ENCODE measurements at regions of chr18 and their contacts with region 1.

Region 1: GRCh38 chr18:77197073-77197472 is 52.6 kb upstream of the GALR1 start:
- DNase-seq: peak; percentile 13
- ATAC-seq: peak; percentile 80
- H3K4me3 ChIP-seq: no peak overlapping the region
- H3K27ac ChIP-seq: no peak overlapping the region
- H3K4me1 ChIP-seq: peaks cover 0 to 9% of the 10 kb centered on the region in 2 experiments; a peak in 2 of 4 replicates
- H3K27me3 ChIP-seq: no peaks in the 10 kb centered on the region
- CTCF ChIP-seq: peak; percentile 47 to 56 (median 49); a peak in 5 of 6 replicates
- POLR2A ChIP-seq: no peak
- RAD21 ChIP-seq: peak; percentile 49; the same call in 1 of the 2 replicates

Region 2: GRCh38 chr18:77207540-77207939 is 10.5 kb after region 1 on chr18:
- CTCF ChIA-PET with region 1: interaction called, 13 read pairs
- POLR2A ChIA-PET with region 1: no interaction called
- RAD21 ChIA-PET with region 1: no interaction called
- intact Hi-C with region 1: no loop called
- DNase-seq: peak; percentile 51
- ATAC-seq: peak; percentile 94
- H3K4me3 ChIP-seq: no peak overlapping the region
- H3K27ac ChIP-seq: no peak overlapping the region
- H3K4me1 ChIP-seq: peaks cover 8 to 14% of the 10 kb centered on the region in 2 experiments
- H3K27me3 ChIP-seq: no peaks in the 10 kb centered on the region
- CTCF ChIP-seq: peak; percentile 61 to 88 (median 82); a peak in 5 of 6 replicates
- POLR2A ChIP-seq: no peak
- RAD21 ChIP-seq: 0 out of 2 replicates have a peak, but pooled peaks have one; percentile 17

Region 3: DNA sequence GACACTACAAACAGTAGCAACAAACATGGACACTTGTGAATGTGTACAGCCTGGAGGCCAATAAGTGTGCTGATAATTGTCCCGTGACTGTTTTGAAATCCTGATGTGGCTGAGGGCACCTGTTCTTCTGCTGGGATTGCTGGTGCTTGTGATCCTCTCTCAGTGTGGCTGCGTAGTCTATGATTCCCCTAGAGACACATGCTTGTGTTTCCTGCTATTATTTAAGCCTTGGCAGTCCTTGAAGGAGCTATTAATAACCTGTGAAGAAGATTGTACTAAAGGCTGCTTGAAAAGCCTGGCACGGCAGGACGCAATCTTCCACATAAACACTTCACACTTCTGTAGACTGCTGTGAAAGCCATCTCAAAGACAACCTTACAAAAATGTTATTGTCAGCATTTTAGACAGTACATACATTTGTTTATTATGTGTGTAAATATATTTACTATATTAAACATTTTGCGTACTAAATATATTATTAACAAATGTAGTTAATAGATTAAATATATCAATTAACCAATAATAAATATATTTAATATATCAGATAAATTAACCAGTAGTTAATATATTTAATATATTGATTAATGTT is 124.0 kb after region 1 on chr18:
- CTCF ChIA-PET with region 1: no interaction called
- POLR2A ChIA-PET with region 1: no interaction called
- RAD21 ChIA-PET with region 1: no interaction called
- intact Hi-C with region 1: no loop called
- DNase-seq: no peak
- ATAC-seq: no peak
- H3K4me3 ChIP-seq: no peak overlapping the region
- H3K27ac ChIP-seq: no peak overlapping the region
- H3K4me1 ChIP-seq: no peaks in the 10 kb centered on the region
- H3K27me3 ChIP-seq: peaks cover 13% of the 10 kb centered on the region; the same call in 1 of the 2 replicates
- CTCF ChIP-seq: no peak
- POLR2A ChIP-seq: no peak
- RAD21 ChIP-seq: no peak

Region 4: GRCh38 chr18:77650799-77651385 is 453.8 kb after region 1 on chr18:
- CTCF ChIA-PET with region 1: no interaction called
- POLR2A ChIA-PET with region 1: no interaction called
- RAD21 ChIA-PET with region 1: no interaction called
- intact Hi-C with region 1: no loop called
- DNase-seq: no peak
- ATAC-seq: no peak
- H3K4me3 ChIP-seq: no peak overlapping the region
- H3K27ac ChIP-seq: no peak overlapping the region
- H3K4me1 ChIP-seq: no peaks in the 10 kb centered on the region
- H3K27me3 ChIP-seq: no peaks in the 10 kb centered on the region
- CTCF ChIP-seq: peak in 2 of 3 experiments; percentile 45 to 46; a peak in 4 of 6 replicates
- POLR2A ChIP-seq: no peak
- RAD21 ChIP-seq: peak; percentile 29; the same call in 1 of the 2 replicates

Measured in HCT116 (cell line).